AG04449 (cell line): ENCODE measurements at regions of chr18 and their contacts with region 1.

Region 1: DNA sequence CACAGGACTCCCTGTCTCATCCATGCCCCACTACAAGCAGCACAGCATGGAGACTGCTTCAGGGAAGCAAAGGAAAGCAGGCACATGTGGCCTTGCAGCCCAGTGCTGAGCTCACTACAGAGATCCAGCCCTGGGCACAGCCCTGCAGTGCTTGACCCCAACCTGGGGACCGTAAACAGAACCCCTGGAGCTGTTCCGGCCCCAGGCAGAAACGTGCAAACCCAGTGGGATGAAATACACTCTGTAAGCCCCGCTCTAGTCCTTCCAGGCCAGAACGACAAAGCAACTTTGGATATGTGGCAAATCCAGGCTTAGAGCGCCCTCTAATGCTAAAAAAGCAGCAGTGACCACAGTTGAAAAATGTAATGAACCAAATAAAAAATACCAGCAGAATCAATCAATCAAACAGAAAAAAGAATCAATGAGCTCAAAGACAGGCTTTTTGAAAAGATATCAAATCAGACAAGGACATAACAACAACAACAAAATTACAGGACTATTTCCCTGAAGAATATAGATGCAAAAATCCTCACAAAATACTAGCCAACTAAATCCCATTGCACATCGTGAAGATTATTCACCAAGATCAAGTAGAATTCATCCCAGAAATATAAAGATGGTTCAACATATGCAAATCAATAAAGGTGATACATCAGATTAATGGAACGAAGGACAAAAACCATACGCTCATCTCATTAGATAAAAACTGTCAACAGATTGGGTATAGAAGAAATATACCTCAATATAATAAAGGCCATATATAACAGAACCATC is 45.6 kb downstream of the ZNF519 start:
- DNase-seq: no peak
- H3K4me3 ChIP-seq: no peak overlapping the region
- CTCF ChIP-seq: peak; percentile 44

Region 2: GRCh38 chr18:13813271-13813849 is 273.3 kb before region 1 on chr18:
- CTCF ChIA-PET with region 1: interaction called, 58 read pairs
- POLR2A ChIA-PET with region 1: no interaction called
- DNase-seq: no peak
- H3K4me3 ChIP-seq: no peak overlapping the region
- CTCF ChIP-seq: peak; percentile 82

Region 3: DNA sequence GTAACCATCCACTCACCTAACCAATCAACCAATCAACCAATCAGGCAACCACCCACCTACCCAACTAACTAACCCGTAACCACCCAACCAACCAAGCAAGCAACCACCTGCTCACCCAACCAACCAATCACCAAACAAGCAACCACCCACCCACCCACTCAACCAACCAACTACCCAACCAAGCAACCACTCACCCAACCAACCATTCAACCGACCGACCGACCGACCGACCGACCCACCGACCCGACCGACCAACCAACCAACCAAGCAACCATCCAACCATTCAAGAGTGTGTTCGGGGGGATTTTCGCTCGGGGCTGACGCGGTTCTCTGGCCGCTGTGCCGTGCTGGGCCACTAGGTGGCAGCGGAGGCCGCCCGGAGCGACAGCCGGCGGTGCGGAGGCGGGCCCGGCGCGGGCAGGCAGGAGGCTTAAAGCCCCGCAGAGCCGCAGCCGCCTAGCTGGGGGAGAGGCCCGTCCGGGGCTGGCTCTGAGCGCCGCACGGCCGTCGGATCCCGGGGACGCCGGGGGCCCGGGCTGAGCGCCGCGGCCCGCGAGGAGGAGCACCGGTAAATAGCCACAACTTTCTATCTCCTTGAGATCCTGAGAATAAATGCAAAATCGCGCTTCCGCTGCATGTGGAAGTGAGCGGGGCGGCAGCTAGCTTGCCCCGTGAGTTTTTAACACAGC is 262.8 kb before region 1 on chr18 and contains the start of gene MC5R:
- CTCF ChIA-PET with region 1: interaction called, 17 read pairs
- POLR2A ChIA-PET with region 1: no interaction called
- DNase-seq: no peak
- H3K4me3 ChIP-seq: peak within 1 kb of the TSS; percentile 45
- CTCF ChIP-seq: peak; percentile 93

Region 4: DNA sequence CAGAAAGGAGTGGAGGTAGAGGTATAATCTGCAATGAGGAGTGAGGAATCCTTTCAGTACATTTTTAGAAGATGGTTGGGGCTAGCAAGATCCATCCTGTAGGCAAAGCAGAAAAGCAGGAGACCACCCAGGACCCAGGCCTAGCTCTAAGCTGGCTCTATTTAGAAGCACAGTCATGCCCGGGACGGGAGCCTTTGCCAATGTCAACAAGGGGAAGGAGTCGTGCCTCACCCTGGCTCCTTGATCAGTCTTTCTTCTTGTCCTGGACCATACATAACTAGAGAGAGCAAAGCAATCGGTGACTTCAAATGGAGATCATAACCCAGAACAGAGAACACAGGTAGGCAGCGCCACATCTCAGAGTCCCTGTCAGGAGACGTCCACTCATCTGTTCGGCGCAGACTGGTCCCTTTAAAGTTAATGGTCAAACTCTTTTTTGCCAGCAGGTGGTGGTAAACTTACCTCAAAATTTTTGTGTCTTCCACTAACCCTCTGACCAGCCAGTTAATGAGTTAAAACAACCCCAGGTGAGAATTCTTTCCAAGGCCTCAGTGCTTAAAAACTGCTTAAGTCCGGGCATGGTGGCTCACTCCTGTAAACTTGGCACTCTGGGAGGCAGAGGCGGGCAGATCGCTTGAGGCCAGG is 254.7 kb before region 1 on chr18:
- CTCF ChIA-PET with region 1: interaction called, 11 read pairs
- POLR2A ChIA-PET with region 1: no interaction called
- DNase-seq: no peak
- H3K4me3 ChIP-seq: no peak overlapping the region
- CTCF ChIP-seq: no peak

Region 5: DNA sequence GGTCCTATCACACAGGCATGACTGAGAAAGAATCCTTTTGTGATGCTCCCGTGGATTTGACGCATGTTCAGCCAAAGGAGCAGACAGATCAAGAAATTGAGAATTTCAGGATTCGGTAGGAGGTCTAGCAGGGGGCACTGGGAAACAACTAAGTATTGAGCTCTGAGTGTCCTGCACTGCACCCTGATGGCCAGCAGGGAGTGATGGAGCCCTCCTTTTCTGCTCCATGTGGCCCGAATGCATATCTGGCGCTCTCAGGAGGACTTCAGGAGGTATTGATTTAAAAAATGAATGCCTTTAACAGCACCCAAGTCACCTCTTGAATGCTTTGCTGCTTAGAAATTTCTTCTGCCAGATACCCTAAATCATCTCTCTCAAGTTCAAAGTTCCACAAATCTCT is 12.5 kb before region 1 on chr18:
- CTCF ChIA-PET with region 1: interaction called, 11 read pairs
- POLR2A ChIA-PET with region 1: no interaction called
- DNase-seq: no peak
- H3K4me3 ChIP-seq: no peak overlapping the region
- CTCF ChIP-seq: peak; percentile 2

Region 6: GRCh38 chr18:14100503-14101286 is 14.1 kb after region 1 on chr18:
- CTCF ChIA-PET with region 1: interaction called, 12 read pairs
- POLR2A ChIA-PET with region 1: no interaction called
- DNase-seq: no peak
- H3K4me3 ChIP-seq: no peak overlapping the region
- CTCF ChIP-seq: no peak